Right lobe of liver (tissue), 6 donors: ENCODE measurements at regions of chr16 and their contacts with region 1.

Region 1: GRCh38 chr16:68503334-68503733 is 35.8 kb upstream of the ZFP90 start:
- DNase-seq: no peak
- ATAC-seq: no peak
- H3K4me3 ChIP-seq: no peak overlapping the region
- H3K27ac ChIP-seq: no peak overlapping the region
- H3K4me1 ChIP-seq: no peaks in the 10 kb centered on the region
- H3K27me3 ChIP-seq: no peaks in the 10 kb centered on the region
- CTCF ChIP-seq: no peak
- POLR2A ChIP-seq: no peak

Region 2: GRCh38 chr16:68264128-68265077 is 238.9 kb before region 1 on chr16 and contains the start of gene SLC7A6:
- intact Hi-C with region 1: no loop called
- DNase-seq: peak; percentile 75 to 86 (median 78)
- ATAC-seq: peak; percentile 75 to 89 (median 80)
- H3K4me3 ChIP-seq: peak within 1 kb of the TSS; percentile 69 to 85 (median 83)
- H3K27ac ChIP-seq: peak within 1 kb of the TSS; percentile 67 to 80 (median 69)
- H3K4me1 ChIP-seq: peaks cover 0 to 18% (median 0%) of the 10 kb centered on the region in 4 donors
- H3K27me3 ChIP-seq: no peaks in the 10 kb centered on the region
- CTCF ChIP-seq: peak; percentile 55 to 72 (median 63)
- POLR2A ChIP-seq: peak; percentile 70
- total RNA-seq, gene SLC7A6: 1.6 to 9.6 (median 4.5) TPM

Region 3: GRCh38 chr16:68396481-68396880 is 106.9 kb before region 1 on chr16:
- intact Hi-C with region 1: loop called (anchors 5 to 10 kb)
- DNase-seq: peak; percentile 55 to 74 (median 68)
- ATAC-seq: peak; percentile 91 to 99 (median 96)
- H3K4me3 ChIP-seq: no peak overlapping the region
- H3K27ac ChIP-seq: no peak overlapping the region
- H3K4me1 ChIP-seq: peaks cover 0 to 7% (median 0%) of the 10 kb centered on the region in 4 donors
- H3K27me3 ChIP-seq: no peaks in the 10 kb centered on the region
- CTCF ChIP-seq: peak; percentile 81 to 86 (median 84)
- POLR2A ChIP-seq: no peak

Region 4: GRCh38 chr16:68426351-68426660 is 77.0 kb before region 1 on chr16:
- intact Hi-C with region 1: no loop called
- DNase-seq: no peak
- ATAC-seq: peak in 1 of 4 donors; percentile 67
- H3K4me3 ChIP-seq: no peak overlapping the region
- H3K27ac ChIP-seq: no peak overlapping the region
- H3K4me1 ChIP-seq: no peaks in the 10 kb centered on the region
- H3K27me3 ChIP-seq: no peaks in the 10 kb centered on the region
- CTCF ChIP-seq: no peak
- POLR2A ChIP-seq: no peak

Region 5: GRCh38 chr16:68448360-68448970 is 54.9 kb before region 1 on chr16 and contains the start of gene SMPD3:
- intact Hi-C with region 1: loop called in 1 of 2 experiments (anchors 5 kb)
- DNase-seq: peak; percentile 95 to 97 (median 96)
- ATAC-seq: peak; percentile 97 to 99 (median 98)
- H3K4me3 ChIP-seq: peak within 1 kb of the TSS; percentile 30 to 53 (median 49)
- H3K27ac ChIP-seq: no peak within 1 kb of the TSS
- H3K4me1 ChIP-seq: peaks cover 0 to 11% (median 5%) of the 10 kb centered on the region in 4 donors
- H3K27me3 ChIP-seq: no peaks in the 10 kb centered on the region
- CTCF ChIP-seq: no peak
- POLR2A ChIP-seq: no peak
- total RNA-seq, gene SMPD3: 0.18 to 27.2 (median 5.0) TPM

Region 6: GRCh38 chr16:68460067-68460466 is 43.3 kb before region 1 on chr16:
- intact Hi-C with region 1: loop called in 1 of 2 experiments (anchors 5 kb)
- DNase-seq: no peak
- ATAC-seq: no peak
- H3K4me3 ChIP-seq: no peak overlapping the region
- H3K27ac ChIP-seq: no peak overlapping the region
- H3K4me1 ChIP-seq: no peaks in the 10 kb centered on the region
- H3K27me3 ChIP-seq: no peaks in the 10 kb centered on the region
- CTCF ChIP-seq: no peak
- POLR2A ChIP-seq: no peak

Region 7: DNA sequence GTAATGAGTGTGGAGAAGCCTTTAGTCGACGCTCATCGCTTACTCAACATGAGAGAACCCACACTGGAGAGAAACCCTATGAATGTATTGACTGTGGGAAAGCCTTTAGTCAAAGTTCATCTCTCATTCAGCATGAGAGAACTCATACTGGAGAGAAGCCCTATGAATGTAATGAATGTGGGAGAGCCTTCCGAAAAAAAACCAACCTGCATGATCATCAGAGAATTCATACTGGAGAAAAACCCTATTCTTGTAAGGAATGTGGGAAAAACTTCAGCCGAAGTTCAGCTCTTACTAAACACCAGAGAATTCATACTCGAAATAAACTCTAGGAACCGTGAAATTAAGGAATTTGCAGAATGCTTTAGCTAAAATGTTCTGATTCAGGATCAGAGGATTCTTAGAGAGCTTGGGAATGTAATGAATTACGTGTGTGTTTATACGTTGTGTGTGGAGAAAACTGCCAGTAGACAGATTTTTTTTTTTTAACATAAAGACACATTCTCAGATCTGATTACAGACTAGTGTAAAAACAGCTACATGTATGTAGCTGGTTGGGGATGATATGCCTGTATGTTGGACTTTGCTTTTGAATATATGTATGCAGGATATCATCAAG is 61.1 kb after region 1 on chr16:
- intact Hi-C with region 1: no loop called
- DNase-seq: no peak
- ATAC-seq: no peak
- H3K4me3 ChIP-seq: no peak overlapping the region
- H3K27ac ChIP-seq: no peak overlapping the region
- H3K4me1 ChIP-seq: no peaks in the 10 kb centered on the region
- H3K27me3 ChIP-seq: no peaks in the 10 kb centered on the region
- CTCF ChIP-seq: no peak
- POLR2A ChIP-seq: no peak